ENCODE measurements at regions of chr15 and their contacts with region 1.

Region 1: GRCh38 chr15:92808978-92809879 is 90.9 kb upstream of the CHD2 start:
- DNase-seq: peak; percentile 99
- ATAC-seq: peak; percentile 83
- H3K4me3 Mint-ChIP-seq: peak overlapping the region; percentile 91
- H3K27ac Mint-ChIP-seq: peak overlapping the region; percentile 98
- H3K4me1 Mint-ChIP-seq: peaks cover 37% of the 10 kb centered on the region
- H3K27me3 Mint-ChIP-seq: no peaks in the 10 kb centered on the region
- CTCF ChIP-seq: peak; percentile 81

Region 2: DNA sequence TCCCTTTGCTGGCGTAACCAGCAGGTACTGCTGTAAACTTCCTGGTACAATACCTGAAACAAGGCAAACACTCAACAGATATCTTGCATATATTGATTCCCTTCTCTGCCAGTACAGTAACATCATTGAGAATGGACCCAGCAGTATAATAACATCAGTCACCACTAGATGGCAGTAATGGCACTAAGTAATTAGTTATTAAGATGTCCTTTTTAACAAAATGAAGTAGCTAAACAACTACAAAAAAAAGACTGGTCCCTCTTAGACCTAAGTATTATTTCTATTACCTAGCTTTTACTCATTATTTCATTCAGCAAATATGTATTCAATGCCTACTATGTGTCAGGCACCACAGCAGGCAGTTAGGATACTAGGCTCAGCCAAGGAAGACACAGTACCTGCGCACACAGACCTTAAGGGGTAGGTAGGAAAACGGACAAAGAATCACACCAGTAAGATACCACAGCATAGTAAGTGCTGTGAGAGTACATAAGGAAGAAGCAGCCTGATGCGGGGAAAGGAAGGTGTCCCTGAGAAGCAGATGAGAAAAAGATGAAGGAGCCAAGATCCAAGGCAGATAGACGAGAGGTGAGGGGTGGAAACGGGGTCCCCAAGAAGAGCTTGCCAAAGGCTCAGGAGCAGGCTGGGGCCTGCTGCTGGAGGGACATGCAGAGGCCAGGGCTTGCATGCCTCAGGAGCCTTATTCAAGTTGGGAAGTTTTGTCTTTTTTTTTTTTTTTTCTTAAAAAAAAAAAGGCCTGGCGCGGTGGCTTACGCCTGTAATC is 11.9 kb before region 1 on chr15:
- CTCF ChIA-PET with region 1: interaction called, 26 read pairs
- POLR2A ChIA-PET with region 1: interaction called, 28 read pairs
- intact Hi-C with region 1: no loop called
- DNase-seq: no peak
- ATAC-seq: peak; percentile 84
- H3K4me3 Mint-ChIP-seq: no peak overlapping the region
- H3K27ac Mint-ChIP-seq: peak overlapping the region; percentile 68
- H3K4me1 Mint-ChIP-seq: peaks cover 6% of the 10 kb centered on the region
- H3K27me3 Mint-ChIP-seq: no peaks in the 10 kb centered on the region
- CTCF ChIP-seq: peak; percentile 22

Region 3: DNA sequence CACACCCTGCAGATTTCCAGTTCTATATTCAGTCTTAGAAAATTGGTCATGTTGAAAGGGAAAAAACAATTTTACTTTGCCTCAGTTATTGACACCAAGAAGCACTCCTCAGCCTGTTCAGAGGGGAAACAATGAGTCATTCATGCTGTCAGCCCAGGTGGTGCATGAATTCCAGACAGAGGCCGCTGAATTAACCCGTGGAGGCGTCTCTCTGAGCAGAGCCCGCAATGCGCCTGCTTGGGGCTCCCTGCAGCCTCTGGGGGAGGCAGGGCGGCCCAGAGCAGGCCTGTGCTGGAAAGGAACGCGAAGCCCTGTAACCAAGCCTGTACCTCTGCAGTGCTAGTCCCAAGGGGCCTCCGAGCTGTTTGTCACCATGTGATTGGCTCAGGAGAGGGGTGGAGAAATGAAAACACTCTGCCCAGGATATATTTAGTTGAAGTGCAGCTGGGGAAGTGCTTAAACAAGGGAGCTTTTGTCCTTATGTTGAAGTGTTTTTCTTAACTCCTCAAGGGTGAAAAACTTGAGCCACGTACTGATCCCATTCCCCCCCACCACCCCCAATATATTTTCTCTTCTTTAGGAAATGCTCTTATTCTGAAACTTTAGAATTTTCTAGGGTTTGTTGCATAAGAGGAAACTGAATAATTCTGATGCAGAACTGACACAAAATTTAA is 22.6 kb after region 1 on chr15:
- CTCF ChIA-PET with region 1: interaction called, 33 read pairs
- POLR2A ChIA-PET with region 1: interaction called, 261 read pairs
- intact Hi-C with region 1: loop called (anchors 1 kb)
- DNase-seq: peak; percentile 86
- ATAC-seq: peak; percentile 93
- H3K4me3 Mint-ChIP-seq: peak overlapping the region; percentile 80
- H3K27ac Mint-ChIP-seq: peak overlapping the region; percentile 96
- H3K4me1 Mint-ChIP-seq: peaks cover 58% of the 10 kb centered on the region
- H3K27me3 Mint-ChIP-seq: no peaks in the 10 kb centered on the region
- CTCF ChIP-seq: no peak

Region 4: DNA sequence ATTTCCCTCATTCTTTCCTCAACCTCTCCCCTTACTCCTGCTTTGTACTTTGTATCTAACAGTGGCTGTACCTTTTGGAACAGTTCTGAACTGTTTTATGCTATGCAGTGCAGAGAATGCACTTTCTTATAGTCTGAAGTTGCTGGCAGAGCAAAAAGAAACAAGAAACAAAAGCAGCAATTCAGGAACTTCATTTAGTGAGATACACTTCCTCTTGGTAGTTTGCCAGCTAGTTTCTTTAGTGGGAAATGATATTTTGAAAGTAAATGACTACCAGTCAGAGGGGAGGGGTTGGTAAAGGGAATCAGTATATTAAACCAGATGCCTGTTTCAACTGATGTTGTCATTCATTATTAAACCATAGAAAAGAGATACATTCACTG is 35.9 kb after region 1 on chr15:
- CTCF ChIA-PET with region 1: no interaction called
- POLR2A ChIA-PET with region 1: interaction called, 96 read pairs
- intact Hi-C with region 1: loop called (anchors 1 kb)
- DNase-seq: no peak
- ATAC-seq: peak; percentile 50
- H3K4me3 Mint-ChIP-seq: peak overlapping the region; percentile 73
- H3K27ac Mint-ChIP-seq: peak overlapping the region; percentile 95
- H3K4me1 Mint-ChIP-seq: peaks cover 71% of the 10 kb centered on the region
- H3K27me3 Mint-ChIP-seq: no peaks in the 10 kb centered on the region
- CTCF ChIP-seq: no peak

Region 5: DNA sequence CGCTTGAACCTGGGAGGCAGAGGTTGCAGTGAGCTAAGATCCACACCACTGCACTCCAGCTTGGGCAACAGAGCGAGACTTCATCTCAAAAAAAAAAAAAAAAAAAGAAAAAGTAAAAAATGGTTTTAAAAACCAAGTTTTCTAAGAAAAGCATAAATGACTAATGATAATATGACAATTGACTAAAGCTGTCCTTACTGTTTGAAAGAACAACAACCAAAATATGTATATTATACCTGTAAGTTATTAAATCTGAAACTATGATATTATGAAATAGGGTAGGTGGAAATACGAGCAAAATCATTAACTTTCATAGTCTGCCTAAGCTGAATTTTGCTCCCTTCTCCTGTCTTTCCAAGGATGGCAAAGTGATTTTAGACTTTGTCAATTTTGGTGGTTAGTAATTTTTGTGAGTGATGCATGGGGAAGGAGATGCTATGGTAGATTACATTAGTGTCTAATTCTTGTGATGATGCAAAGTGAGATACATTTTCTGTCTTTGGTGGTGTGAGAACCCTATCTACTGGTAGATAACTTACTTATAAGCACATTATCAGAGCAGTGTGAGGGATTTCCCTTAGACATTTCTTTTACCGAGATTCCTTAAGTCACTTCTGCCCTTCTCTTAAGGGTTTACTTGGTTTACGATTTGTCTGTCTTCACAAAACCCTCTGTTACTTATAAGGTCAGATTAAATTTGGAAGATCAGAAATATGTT is 80.3 kb after region 1 on chr15:
- CTCF ChIA-PET with region 1: interaction called, 10 read pairs
- POLR2A ChIA-PET with region 1: interaction called, 599 read pairs
- intact Hi-C with region 1: no loop called
- DNase-seq: no peak
- ATAC-seq: no peak
- H3K4me3 Mint-ChIP-seq: peak overlapping the region; percentile 13
- H3K27ac Mint-ChIP-seq: peak overlapping the region; percentile 59
- H3K4me1 Mint-ChIP-seq: peaks cover 62% of the 10 kb centered on the region
- H3K27me3 Mint-ChIP-seq: no peaks in the 10 kb centered on the region
- CTCF ChIP-seq: no peak

Region 6: GRCh38 chr15:92903941-92904831 is 95.0 kb after region 1 on chr15:
- CTCF ChIA-PET with region 1: interaction called, 33 read pairs
- POLR2A ChIA-PET with region 1: interaction called, 446 read pairs
- intact Hi-C with region 1: loop called (anchors 1 kb)
- DNase-seq: peak; percentile 99
- ATAC-seq: peak; percentile 81
- H3K4me3 Mint-ChIP-seq: peak overlapping the region; percentile 97
- H3K27ac Mint-ChIP-seq: peak overlapping the region; percentile 100
- H3K4me1 Mint-ChIP-seq: peaks cover 73% of the 10 kb centered on the region
- H3K27me3 Mint-ChIP-seq: no peaks in the 10 kb centered on the region
- CTCF ChIP-seq: no peak

Region 7: DNA sequence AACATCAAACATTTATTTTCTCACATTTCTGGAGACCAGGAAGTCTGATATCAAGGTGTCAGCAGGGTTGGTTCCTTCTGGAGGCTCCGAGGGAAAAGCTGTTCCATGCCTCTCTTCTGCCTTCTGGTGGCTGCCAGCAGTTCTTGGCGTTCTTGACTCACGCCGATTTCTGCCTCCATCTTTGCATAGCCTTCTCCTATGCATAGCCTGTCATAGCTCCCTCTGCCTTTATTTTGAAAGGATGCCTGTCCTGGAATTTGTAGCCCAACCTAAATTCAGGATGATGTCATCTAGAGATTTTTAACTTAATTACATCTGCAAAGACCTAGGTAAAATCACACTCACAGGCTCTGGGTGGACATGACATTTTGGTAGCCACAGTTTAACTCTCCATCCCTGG is 209.4 kb after region 1 on chr15:
- CTCF ChIA-PET with region 1: no interaction called
- POLR2A ChIA-PET with region 1: no interaction called
- intact Hi-C with region 1: no loop called
- DNase-seq: no peak
- ATAC-seq: no peak
- H3K4me3 Mint-ChIP-seq: no peak overlapping the region
- H3K27ac Mint-ChIP-seq: no peak overlapping the region
- H3K4me1 Mint-ChIP-seq: peaks cover 20% of the 10 kb centered on the region
- H3K27me3 Mint-ChIP-seq: no peaks in the 10 kb centered on the region
- CTCF ChIP-seq: no peak